ENCODE measurements at regions of chr9 and their contacts with region 1.

Region 1: DNA sequence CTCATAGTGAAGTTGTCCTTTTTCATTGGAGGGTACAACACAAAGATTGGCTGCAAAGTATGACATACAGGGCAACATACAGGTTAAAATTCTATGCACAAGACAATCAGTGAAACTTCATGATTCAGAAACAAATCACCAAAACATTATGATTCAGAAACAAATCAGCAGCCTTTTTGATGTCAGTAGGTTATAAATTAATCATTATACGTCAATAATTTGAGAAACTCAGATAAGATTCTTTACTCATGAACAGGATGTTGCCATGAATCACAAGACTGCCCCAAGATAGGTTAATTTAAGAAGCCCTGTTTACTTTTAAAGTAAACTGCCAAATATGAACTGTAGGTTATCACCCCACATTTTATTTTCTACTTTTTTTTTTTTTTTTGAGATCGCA is 62.2 kb upstream of the IL33 start:
- DNase-seq: no peak
- H3K4me3 ChIP-seq: no peak overlapping the region
- H3K27ac ChIP-seq: no peak overlapping the region
- H3K27me3 ChIP-seq: no peaks in the 10 kb centered on the region
- CTCF ChIP-seq: no peak

Region 2: DNA sequence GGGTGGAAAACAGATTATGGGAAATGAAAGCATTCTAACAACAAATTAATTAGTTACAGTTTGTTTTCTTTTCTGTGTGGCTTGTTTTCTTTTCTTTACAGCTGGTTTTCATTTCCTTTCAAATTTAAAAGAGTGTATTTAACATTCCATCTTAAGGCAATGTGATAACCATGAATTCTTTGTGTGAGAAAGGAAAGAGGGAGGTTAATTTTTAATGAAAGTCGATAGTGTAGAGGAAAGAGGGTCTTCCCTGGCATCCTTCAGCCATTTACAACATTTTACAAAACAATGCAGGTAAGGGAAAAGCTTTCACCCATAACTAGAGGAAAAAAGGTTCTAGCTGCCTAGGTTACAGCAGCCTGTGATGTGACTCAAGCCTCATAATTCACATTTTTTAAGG is 18.2 kb after region 1 on chr9:
- CTCF ChIA-PET with region 1: no interaction called
- POLR2A ChIA-PET with region 1: interaction called, 12 read pairs
- DNase-seq: no peak
- H3K4me3 ChIP-seq: no peak overlapping the region
- H3K27ac ChIP-seq: no peak overlapping the region
- H3K27me3 ChIP-seq: no peaks in the 10 kb centered on the region
- CTCF ChIP-seq: no peak

Region 3: DNA sequence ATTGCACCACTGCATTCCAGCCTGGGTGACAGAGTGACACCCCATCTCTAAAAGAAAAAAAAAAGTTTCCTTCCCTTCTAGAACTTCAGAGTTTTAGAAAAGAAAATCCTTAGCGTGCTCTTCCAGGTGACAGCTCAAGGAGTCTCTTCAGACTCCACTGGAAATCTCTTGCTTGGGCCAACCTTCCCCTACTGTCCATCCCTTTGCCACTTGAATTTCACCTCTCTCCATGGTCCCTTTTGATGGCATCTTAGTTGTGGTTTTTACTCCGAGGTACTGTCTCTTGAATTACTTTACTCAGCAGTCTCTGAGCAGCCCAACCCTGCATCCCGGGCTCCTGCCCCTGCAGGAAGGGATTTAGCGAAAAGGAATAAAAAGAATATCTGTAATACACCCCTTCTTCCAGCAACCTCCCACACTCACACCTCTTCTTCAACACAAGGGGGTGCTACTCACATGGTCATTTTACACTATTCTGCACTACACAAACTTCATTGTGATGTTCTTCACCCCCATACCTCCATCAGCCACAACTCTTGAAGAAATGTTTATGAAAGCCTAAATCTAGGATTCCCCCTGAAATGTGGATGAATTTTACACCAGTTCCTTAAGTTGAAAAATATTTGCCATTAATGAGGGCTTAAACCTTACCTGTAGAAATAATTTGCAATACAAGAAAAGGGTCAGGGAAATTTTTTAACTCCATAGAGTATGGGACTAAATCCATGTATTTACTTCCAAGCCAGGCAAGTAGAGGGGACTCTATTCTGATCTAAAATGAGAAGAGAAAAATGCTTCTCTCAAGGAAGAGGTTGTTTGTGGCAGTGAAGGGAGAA is 200.6 kb after region 1 on chr9:
- CTCF ChIA-PET with region 1: no interaction called
- POLR2A ChIA-PET with region 1: no interaction called
- DNase-seq: peak; percentile 48
- H3K4me3 ChIP-seq: no peak overlapping the region
- H3K27ac ChIP-seq: no peak overlapping the region
- H3K27me3 ChIP-seq: no peaks in the 10 kb centered on the region
- CTCF ChIP-seq: peak; percentile 79

Measured in AG04450 (cell line).